Activated CD4-positive, alpha-beta T cell treated with anti-CD3 and anti-CD28 coated beads, Interleukin-2, amount 10 ng/mL, durations not matched to agents 24 days and 14 days (primary cell): ENCODE measurements at regions of chr7 and their contacts with region 1.

Region 1: DNA sequence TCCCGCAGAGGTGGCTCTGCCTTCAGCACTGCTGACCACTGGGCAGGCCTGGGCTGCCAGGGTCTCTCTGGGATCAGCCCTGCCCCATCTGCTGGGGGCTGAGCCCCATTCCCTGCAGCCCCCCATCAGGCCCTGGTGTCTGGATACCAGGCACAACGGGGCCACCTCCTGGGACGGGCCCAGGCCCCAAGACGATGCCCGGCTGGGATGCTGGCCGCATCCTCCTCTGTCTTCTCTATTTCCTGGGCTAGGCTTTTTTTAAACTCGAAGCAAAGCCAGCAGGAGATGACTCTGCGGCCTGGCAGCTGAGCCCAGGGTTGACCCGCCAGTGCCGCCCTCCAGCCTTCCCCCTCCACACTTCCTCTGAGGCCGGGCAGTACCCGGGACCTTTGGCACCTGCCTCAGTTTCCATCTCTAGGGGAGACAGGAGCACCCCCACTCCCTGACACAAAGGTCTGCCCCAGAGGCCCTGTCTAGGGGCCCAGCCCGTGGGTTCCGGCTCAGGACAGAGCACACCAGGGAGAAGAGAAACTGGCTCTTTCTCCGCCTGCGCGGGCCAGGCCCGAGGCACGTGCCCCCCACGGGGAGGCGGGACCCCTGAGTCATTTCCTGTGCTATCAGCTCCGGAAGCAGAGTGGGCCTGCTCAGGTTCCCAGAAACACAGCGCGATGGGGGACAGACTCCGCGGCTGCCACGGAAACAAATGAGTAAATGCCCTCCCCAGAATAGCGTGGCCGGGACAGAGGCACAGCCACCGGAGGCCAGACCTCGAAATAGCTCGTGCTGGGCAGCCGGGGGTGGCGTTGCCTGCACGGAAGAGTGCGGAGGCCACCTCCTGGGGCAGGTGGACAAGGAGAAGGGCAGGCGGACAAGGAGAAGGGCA is 84.6 kb upstream of the PDGFA start:
- DNase-seq: peak; percentile 97
- H3K4me3 Mint-ChIP-seq: peak overlapping the region; percentile 96
- H3K27ac Mint-ChIP-seq: peak overlapping the region; percentile 100
- H3K4me1 Mint-ChIP-seq: peaks cover 45% of the 10 kb centered on the region
- H3K27me3 Mint-ChIP-seq: no peaks in the 10 kb centered on the region

Region 2: DNA sequence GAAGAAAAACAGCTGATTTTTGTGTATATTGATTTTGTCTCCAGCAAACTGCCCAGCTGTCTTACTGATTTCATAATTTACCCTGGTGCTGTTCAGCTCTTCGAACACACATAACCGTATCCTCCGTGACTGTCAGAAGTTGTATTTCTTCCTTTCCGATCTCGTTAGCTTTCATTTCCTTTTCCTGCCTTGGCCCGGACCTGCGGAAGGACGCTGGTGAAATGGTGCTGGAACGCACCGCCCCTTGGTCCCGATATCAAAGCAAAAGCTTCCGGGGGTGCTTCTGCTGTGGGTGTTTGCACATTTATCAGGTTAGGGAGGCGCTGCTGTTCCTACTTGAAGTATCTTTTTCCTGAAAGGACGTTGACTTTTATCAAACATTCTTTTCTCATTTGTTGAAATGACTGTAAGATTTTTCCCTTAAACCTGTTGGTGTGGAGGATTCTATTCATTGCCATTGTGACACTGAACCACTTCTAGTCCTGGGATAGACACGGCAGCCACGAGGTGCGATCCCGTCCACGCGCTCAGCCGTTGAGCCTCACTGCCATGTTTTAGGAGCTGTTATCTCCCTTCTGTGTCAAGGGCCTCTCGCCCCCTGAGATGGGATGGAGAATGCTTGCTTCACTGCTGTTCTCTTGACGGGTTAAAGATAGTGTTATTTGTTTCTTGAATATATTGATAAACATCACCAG is 241.7 kb before region 1 on chr7:
- intact Hi-C with region 1: loop called (anchors 10 kb)
- DNase-seq: peak; percentile 82
- H3K4me3 Mint-ChIP-seq: peak overlapping the region; percentile 87
- H3K27ac Mint-ChIP-seq: peak overlapping the region; percentile 90
- H3K4me1 Mint-ChIP-seq: peaks cover 49% of the 10 kb centered on the region
- H3K27me3 Mint-ChIP-seq: no peaks in the 10 kb centered on the region

Region 3: GRCh38 chr7:584122-584465 is 20.1 kb before region 1 on chr7:
- intact Hi-C with region 1: loop called (anchors 1 kb)
- DNase-seq: peak; percentile 95
- H3K4me3 Mint-ChIP-seq: peak overlapping the region; percentile 86
- H3K27ac Mint-ChIP-seq: peak overlapping the region; percentile 98
- H3K4me1 Mint-ChIP-seq: peaks cover 35% of the 10 kb centered on the region
- H3K27me3 Mint-ChIP-seq: no peaks in the 10 kb centered on the region

Region 4: GRCh38 chr7:618539-619367 is 14.5 kb after region 1 on chr7:
- intact Hi-C with region 1: loop called (anchors 1 kb)
- DNase-seq: peak; percentile 92
- H3K4me3 Mint-ChIP-seq: peak overlapping the region; percentile 79
- H3K27ac Mint-ChIP-seq: peak overlapping the region; percentile 99
- H3K4me1 Mint-ChIP-seq: peaks cover 39% of the 10 kb centered on the region
- H3K27me3 Mint-ChIP-seq: no peaks in the 10 kb centered on the region

Region 5: DNA sequence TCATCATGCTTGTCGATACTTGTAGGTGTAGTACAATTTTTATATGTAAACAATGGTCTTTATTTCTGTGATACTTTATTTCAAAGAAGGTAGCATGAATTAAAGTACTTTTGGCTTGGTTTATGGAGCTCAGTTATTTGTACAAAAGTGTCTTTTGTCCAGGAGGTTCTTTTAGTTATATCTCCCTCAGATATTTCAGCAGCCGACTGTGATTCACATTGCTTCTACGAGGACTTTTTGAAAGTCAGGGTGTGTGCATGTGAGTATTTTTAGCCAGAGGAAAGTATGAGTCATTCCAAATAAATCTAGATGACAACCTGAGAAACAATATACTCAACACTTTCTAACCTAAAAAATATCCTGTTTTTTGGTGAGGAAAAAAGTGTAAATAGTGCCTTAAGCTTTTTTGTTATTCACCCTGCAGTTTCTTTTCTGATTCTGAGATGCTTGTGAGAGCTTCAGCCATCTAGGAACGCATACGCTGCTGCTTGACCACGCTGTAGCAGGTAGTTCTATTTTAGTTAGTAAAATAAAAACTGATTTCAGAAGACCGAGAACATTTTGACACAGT is 227.4 kb after region 1 on chr7:
- intact Hi-C with region 1: loop called (anchors 1 kb)
- DNase-seq: peak; percentile 73
- H3K4me3 Mint-ChIP-seq: peak overlapping the region; percentile 81
- H3K27ac Mint-ChIP-seq: peak overlapping the region; percentile 96
- H3K4me1 Mint-ChIP-seq: peaks cover 36% of the 10 kb centered on the region
- H3K27me3 Mint-ChIP-seq: no peaks in the 10 kb centered on the region